ENCODE measurements at regions of chr17 and their contacts with region 1.

Region 1: GRCh38 chr17:55527540-55528118 is 16.4 kb upstream of the SMIM36 start:
- DNase-seq: no peak
- ATAC-seq: peak; percentile 82

Region 2: GRCh38 chr17:55233840-55234239 is 293.8 kb before region 1 on chr17:
- intact Hi-C with region 1: no loop called
- DNase-seq: no peak
- ATAC-seq: no peak

Region 3: DNA sequence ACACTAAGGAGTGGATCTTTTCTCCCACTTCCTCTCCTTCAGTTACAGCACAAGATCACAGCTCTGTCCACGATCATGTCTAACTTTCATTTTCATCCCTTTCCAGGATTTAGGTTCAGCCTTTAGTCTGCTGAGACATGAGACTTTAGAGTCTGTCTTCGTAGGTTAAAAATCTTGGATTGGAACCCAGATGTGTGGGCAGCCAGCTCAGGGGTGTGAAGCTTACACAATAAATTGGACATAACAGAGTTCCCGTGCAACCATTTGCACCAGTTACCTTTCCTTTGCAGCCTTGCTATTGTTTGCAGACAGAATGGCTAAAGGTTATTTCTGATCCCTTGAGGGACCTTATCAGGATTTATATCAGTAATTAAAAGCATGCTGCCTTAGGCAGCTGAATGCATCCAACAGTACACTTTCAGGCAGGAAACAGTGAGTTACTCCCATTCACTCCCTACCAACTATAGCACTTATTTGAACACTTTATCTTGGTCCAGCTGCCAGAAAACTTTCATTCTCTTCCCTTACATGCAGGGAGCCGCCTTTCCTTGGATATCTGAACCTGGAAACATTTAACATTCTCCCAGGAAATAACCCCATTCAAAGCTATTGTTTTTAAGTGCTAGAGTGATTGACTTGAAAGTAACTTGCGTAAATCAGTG is 107.8 kb after region 1 on chr17:
- intact Hi-C with region 1: loop called (anchors 10 kb)
- DNase-seq: no peak
- ATAC-seq: peak; percentile 79

Region 4: GRCh38 chr17:55717898-55718735 is 190.5 kb after region 1 on chr17:
- intact Hi-C with region 1: loop called (anchors 2 kb)
- DNase-seq: peak; percentile 80
- ATAC-seq: peak; percentile 40

Region 5: DNA sequence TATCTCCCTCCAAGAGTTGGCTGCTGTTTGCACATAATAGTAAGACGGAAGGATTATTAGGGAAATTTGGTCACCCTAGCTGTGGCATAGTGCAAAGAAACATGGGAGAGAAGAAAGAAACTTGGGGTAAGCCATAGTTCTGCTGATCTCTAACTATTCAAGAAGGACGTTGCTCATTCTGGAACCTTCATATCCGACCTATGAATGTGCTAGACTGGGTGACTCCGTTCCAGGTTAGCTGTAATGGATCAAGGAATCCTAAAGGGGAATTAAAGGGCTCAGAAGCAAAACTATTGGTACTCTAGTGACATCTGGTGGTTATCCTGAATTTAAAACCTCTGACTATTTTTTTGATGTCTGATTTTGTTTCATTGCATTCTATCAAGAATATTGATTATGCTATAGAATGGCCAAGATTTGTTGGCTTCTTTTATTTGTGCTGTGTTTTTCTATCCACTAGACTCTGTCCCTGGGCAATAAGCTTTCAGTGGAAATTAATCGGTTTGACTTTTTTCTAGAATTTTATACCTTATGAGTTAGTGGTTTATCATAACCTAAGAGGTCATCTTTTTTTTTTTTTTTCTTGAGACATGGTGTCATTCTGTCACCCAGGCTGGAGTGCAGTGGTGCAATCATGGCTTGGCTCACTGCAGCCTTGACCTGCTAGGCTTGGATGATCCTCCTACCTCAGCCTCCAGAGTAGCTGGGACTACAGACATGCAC is 242.7 kb after region 1 on chr17:
- intact Hi-C with region 1: loop called (anchors 5 kb)
- DNase-seq: no peak
- ATAC-seq: peak; percentile 74

Region 6: DNA sequence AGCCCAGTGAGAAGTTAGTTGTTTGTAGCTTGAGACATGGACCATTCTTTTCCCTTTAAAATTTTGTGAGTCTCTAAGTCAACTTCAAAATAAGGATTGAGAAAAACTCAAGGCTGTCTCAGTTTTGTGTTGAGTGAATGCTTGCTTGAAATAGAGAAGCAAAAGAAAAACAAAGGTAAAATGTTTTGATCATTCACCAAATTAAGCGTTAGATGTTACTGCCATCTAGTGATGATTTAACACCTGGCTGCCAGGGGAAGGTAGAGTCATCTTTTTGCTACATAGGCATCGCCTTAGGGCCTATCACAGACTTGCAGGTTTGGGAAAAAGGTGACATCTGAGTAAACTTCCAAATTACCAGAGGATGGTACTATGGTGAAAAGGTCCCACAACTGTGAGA is 297.6 kb after region 1 on chr17:
- intact Hi-C with region 1: loop called (anchors 2 kb)
- DNase-seq: no peak
- ATAC-seq: no peak

Measured in left ventricle myocardium superior (tissue), 1 donor.